ENCODE measurements at regions of chr20 and their contacts with region 1.

Region 1: GRCh38 chr20:35447082-35447789 is 8.2 kb upstream of the CEP250 start:
- DNase-seq: peak; percentile 84
- H3K4me3 Mint-ChIP-seq: peak overlapping the region; percentile 89
- H3K27ac Mint-ChIP-seq: peak overlapping the region; percentile 72
- H3K4me1 Mint-ChIP-seq: peaks cover 4% of the 10 kb centered on the region
- H3K27me3 Mint-ChIP-seq: peaks cover 11% of the 10 kb centered on the region

Region 2: DNA sequence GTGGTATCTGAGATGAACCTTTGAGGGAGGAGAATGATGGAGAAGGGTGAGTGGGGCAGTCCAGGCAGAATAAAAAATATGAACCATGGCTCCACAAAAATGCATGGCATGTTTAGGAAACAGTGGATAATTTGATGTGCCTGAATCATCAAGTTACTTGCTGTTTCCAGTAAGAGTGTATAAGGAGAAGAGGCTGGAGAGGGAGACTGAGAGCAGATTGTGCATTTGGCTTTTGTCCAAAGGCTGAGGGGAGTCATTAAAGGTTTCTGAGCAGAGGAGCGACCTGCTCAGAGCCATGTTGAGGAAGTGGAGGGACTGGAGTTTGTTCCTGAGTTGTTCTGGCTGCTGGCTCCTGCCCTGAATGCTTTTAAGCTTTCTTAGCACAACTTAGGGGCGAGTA is 214.7 kb before region 1 on chr20:
- intact Hi-C with region 1: no loop called
- DNase-seq: no peak
- H3K4me3 Mint-ChIP-seq: no peak overlapping the region
- H3K27ac Mint-ChIP-seq: no peak overlapping the region
- H3K4me1 Mint-ChIP-seq: no peaks in the 10 kb centered on the region
- H3K27me3 Mint-ChIP-seq: peaks cover 15% of the 10 kb centered on the region

Region 3: DNA sequence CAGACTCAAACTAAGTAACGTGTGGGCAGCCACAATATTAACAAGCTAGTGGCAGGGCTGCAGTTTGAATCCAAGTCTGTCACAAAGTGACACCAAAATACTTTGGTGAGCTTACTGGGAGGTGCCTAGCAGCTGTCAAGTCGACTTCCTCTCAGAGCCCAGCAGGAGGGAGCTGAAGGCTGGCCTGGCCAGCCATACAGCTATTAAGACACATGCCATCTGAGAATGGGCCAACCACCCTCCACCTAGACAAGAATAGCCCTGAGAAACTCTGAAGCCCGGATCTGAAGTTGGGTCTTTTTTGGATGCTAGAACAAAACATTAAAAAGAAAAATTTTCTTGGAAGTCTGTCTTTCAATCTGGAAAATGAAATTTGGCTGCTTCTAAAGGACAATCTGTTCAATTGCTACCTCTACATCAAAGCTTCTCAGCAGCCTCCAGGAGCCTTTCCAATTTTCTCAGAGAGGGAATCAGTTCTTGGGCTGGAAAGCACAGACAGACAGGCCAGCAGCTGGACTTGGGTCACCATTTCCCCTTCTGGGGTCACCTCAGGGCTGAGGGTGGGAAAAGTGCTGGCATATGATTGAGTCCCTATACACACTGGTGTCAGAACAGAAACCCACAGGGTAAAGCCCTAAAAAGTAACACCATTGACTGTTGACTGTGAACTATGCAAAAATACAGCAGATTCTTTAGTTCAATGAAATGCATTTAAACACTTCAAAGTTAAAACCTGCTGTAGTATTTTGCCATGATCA is 78.4 kb before region 1 on chr20:
- intact Hi-C with region 1: no loop called
- DNase-seq: no peak
- H3K4me3 Mint-ChIP-seq: no peak overlapping the region
- H3K27ac Mint-ChIP-seq: no peak overlapping the region
- H3K4me1 Mint-ChIP-seq: no peaks in the 10 kb centered on the region
- H3K27me3 Mint-ChIP-seq: no peaks in the 10 kb centered on the region

Region 4: GRCh38 chr20:35410613-35411012 is 36.6 kb before region 1 on chr20:
- intact Hi-C with region 1: loop called (anchors 1 kb)
- DNase-seq: no peak
- H3K4me3 Mint-ChIP-seq: peak overlapping the region; percentile 87
- H3K27ac Mint-ChIP-seq: peak overlapping the region; percentile 19
- H3K4me1 Mint-ChIP-seq: peaks cover 6% of the 10 kb centered on the region
- H3K27me3 Mint-ChIP-seq: no peaks in the 10 kb centered on the region

Region 5: GRCh38 chr20:35421322-35421721 is 25.9 kb before region 1 on chr20:
- intact Hi-C with region 1: no loop called
- DNase-seq: no peak
- H3K4me3 Mint-ChIP-seq: no peak overlapping the region
- H3K27ac Mint-ChIP-seq: no peak overlapping the region
- H3K4me1 Mint-ChIP-seq: no peaks in the 10 kb centered on the region
- H3K27me3 Mint-ChIP-seq: peaks cover 14% of the 10 kb centered on the region

Region 6: DNA sequence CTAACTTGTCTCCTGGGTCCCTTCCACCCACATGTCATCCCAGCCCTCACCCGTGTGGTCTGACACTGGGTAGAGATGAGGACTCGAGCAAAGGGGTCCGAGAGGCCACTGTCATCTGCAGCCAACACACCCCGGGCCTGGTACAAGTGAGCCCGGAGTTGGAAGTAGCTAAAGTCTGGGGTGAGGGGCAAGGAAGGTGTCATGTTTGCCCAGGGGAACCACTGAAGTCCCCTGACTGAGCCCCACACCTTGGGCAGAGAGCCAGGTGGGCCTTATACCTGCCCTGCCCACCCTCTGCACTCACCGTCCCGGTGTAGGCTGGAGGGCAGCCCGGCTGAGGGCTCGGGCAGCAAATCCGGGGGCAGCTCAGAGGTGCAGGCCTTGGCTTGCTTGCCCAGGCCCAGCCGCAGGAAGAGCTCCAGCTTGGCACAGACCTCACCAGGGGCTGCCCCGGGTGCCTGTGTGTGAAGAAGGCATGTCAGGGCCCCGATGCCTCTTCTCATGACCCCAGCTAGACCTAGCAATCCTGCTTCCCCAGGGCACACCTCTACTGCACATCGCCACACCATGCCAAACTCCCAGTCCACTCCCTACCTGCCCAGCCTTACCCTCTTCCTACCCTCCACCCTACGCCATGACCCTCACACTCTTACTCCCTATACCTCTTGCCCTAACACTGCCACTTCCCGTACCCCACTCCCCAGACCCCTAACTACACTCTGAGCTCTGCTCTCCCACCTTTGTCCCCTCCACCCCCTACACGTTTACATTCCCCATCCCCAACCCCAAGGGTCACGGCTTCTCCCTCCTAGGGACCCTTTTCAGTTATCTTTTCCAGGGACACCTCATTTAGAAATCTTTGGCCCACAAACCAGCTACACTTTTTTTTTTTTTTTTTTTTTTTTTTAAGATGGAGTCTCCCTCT is 136.7 kb after region 1 on chr20:
- intact Hi-C with region 1: no loop called
- DNase-seq: no peak
- H3K4me3 Mint-ChIP-seq: no peak overlapping the region
- H3K27ac Mint-ChIP-seq: no peak overlapping the region
- H3K4me1 Mint-ChIP-seq: no peaks in the 10 kb centered on the region
- H3K27me3 Mint-ChIP-seq: peaks cover 3% of the 10 kb centered on the region